ENCODE measurements at regions of chr3 and their contacts with region 1.

Region 1: DNA sequence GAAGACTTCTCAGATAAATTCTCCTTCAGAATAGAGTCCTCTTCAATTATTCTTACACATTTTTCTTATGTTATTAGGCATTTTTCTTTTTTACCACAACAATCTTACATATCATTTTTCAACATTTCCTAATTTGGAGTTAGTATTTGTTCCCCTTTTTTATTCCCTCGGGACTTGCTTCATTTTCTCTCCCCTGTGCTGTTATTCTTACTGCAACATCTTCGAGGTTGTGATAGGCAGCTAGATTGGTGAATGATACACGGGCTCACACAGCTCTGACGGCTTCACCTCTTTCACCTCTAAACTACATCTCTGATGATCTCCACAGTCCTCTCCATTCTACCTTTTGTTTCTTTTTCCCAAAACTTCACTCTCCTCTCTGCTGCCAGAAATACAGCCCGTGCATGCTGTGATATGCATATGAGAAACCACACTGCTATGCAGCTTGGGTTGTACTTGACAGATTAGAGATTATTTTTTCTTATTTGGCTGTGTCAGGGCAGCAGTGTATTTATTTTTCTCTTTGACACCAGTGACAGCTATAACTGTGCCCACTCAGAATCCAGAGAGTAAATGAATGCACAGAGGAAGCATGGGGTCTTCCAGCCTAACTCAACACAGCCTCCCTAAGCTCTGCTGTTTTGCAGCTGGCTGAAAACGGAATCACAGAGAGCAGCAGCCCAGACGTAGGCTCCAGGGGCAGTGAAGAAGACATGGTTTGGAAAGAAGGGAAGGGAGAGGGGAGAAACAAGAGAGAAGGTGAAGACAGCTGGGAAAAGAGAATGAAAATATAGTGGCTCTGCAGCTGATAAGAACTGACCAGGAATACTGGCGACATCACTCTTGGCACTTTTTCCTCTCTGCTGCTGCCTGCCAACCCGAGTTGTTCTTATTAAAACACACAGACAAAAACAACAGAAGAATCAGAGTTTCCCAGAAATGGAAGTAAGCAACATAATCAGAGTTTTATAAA is 61.8 kb downstream of the SLC9A9 start:
- DNase-seq: peak; percentile 79
- H3K4me3 ChIP-seq: peak overlapping the region; percentile 1 to 32 (median 14)
- H3K27ac ChIP-seq: peak overlapping the region; percentile 28 to 62 (median 37)
- H3K4me1 ChIP-seq: peaks cover 0 to 15% (median 10%) of the 10 kb centered on the region in 4 donors
- H3K27me3 ChIP-seq: no peaks in the 10 kb centered on the region
- CTCF ChIP-seq: no peak
- EP300 ChIP-seq: no peak
- POLR2A ChIP-seq: no peak

Region 2: GRCh38 chr3:143847787-143848631 is 61.5 kb after region 1 on chr3 and contains the start of gene SLC9A9:
- intact Hi-C with region 1: loop called (anchors 5 kb)
- DNase-seq: no peak
- H3K4me3 ChIP-seq: peak within 1 kb of the TSS; percentile 47 to 59 (median 56)
- H3K27ac ChIP-seq: peak within 1 kb of the TSS; percentile 48 to 69 (median 64)
- H3K4me1 ChIP-seq: peaks cover 0 to 38% (median 16%) of the 10 kb centered on the region in 4 donors
- H3K27me3 ChIP-seq: no peaks in the 10 kb centered on the region
- CTCF ChIP-seq: no peak
- EP300 ChIP-seq: no peak
- POLR2A ChIP-seq: no peak
- total RNA-seq, gene SLC9A9: 18.9 to 29.9 (median 25.2) TPM

Region 3: DNA sequence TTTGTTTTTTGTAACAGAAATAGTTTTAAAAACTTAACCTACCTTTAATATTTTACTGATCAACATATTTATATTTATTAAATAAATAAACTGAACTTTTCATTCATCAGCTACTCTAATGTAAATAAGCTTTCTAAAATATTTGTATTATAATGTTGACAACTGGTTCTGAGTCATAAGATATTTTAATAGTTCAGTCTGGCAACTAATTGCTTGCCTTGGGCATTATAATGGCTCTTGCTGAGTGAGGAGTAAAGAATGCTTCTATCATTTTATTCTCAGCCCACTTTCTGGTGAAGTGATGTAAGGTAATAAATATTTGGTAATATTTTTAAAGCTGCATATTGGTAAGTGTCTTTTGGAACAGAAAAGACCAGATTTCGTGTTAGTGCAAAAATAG is 266.6 kb after region 1 on chr3:
- intact Hi-C with region 1: no loop called
- DNase-seq: no peak
- H3K4me3 ChIP-seq: no peak overlapping the region
- H3K27ac ChIP-seq: no peak overlapping the region
- H3K4me1 ChIP-seq: no peaks in the 10 kb centered on the region
- H3K27me3 ChIP-seq: no peaks in the 10 kb centered on the region
- CTCF ChIP-seq: no peak
- EP300 ChIP-seq: no peak
- POLR2A ChIP-seq: no peak

Measured in sigmoid colon (tissue), 7 donors.